GM12878 (cell line): ENCODE measurements at regions of chr1 and their contacts with region 1.

Region 1: GRCh38 chr1:17606826-17607440 is 67.4 kb downstream of the ARHGEF10L start:
- DNase-seq: no peak
- ATAC-seq: peak; percentile 81
- H3K4me3 ChIP-seq: no peak overlapping the region
- H3K27ac ChIP-seq: no peak overlapping the region
- H3K4me1 ChIP-seq: no peaks in the 10 kb centered on the region
- H3K27me3 ChIP-seq: no peaks in the 10 kb centered on the region; a peak in 2 of 4 replicates
- CTCF ChIP-seq: peak; percentile 80 to 92 (median 91); a peak in 5 of 6 replicates
- EP300 ChIP-seq: no peak
- POLR2A ChIP-seq: no peak
- RAD21 ChIP-seq: peak; percentile 83

Region 2: GRCh38 chr1:17494114-17494729 is 112.7 kb before region 1 on chr1:
- CTCF ChIA-PET with region 1: interaction called, 255 read pairs
- POLR2A ChIA-PET with region 1: interaction called, 6 read pairs
- RAD21 ChIA-PET with region 1: interaction called, 19 read pairs
- SMC1A ChIA-PET with region 1: interaction called, 13 read pairs
- in situ Hi-C with region 1: no loop called
- intact Hi-C with region 1: loop called (anchors 2 kb)
- DNase-seq: peak; percentile 15
- ATAC-seq: peak; percentile 99
- H3K4me3 ChIP-seq: no peak overlapping the region
- H3K27ac ChIP-seq: no peak overlapping the region
- H3K4me1 ChIP-seq: no peaks in the 10 kb centered on the region
- H3K27me3 ChIP-seq: no peaks in the 10 kb centered on the region
- CTCF ChIP-seq: peak; percentile 84 to 91 (median 87)
- EP300 ChIP-seq: no peak
- POLR2A ChIP-seq: no peak
- RAD21 ChIP-seq: peak; percentile 80

Region 3: GRCh38 chr1:17507916-17508315 is 99.0 kb before region 1 on chr1:
- CTCF ChIA-PET with region 1: interaction called, 255 read pairs
- POLR2A ChIA-PET with region 1: interaction called, 5 read pairs
- RAD21 ChIA-PET with region 1: interaction called, 118 read pairs
- SMC1A ChIA-PET with region 1: interaction called, 88 read pairs
- in situ Hi-C with region 1: loop called (anchors 10 kb)
- intact Hi-C with region 1: no loop called
- DNase-seq: no peak
- ATAC-seq: no peak
- H3K4me3 ChIP-seq: no peak overlapping the region
- H3K27ac ChIP-seq: no peak overlapping the region
- H3K4me1 ChIP-seq: no peaks in the 10 kb centered on the region
- H3K27me3 ChIP-seq: no peaks in the 10 kb centered on the region
- CTCF ChIP-seq: 0 out of 6 replicates have a peak, but pooled peaks of 2 of the 3 experiments have one; percentile 15 to 16
- EP300 ChIP-seq: no peak
- POLR2A ChIP-seq: no peak
- RAD21 ChIP-seq: no peak

Region 4: GRCh38 chr1:17574516-17574915 is 32.4 kb before region 1 on chr1:
- CTCF ChIA-PET with region 1: interaction called, 29 read pairs
- POLR2A ChIA-PET with region 1: no interaction called
- RAD21 ChIA-PET with region 1: interaction called, 24 read pairs
- SMC1A ChIA-PET with region 1: interaction called, 6 read pairs
- in situ Hi-C with region 1: no loop called
- intact Hi-C with region 1: no loop called
- DNase-seq: no peak
- ATAC-seq: peak; percentile 39
- H3K4me3 ChIP-seq: no peak overlapping the region
- H3K27ac ChIP-seq: no peak overlapping the region
- H3K4me1 ChIP-seq: no peaks in the 10 kb centered on the region
- H3K27me3 ChIP-seq: 0 out of 4 replicates have a peak, but pooled peaks cover 0 to 1% of the 10 kb centered on the region in 2 experiments
- CTCF ChIP-seq: no peak
- EP300 ChIP-seq: no peak
- POLR2A ChIP-seq: no peak
- RAD21 ChIP-seq: no peak

Region 5: DNA sequence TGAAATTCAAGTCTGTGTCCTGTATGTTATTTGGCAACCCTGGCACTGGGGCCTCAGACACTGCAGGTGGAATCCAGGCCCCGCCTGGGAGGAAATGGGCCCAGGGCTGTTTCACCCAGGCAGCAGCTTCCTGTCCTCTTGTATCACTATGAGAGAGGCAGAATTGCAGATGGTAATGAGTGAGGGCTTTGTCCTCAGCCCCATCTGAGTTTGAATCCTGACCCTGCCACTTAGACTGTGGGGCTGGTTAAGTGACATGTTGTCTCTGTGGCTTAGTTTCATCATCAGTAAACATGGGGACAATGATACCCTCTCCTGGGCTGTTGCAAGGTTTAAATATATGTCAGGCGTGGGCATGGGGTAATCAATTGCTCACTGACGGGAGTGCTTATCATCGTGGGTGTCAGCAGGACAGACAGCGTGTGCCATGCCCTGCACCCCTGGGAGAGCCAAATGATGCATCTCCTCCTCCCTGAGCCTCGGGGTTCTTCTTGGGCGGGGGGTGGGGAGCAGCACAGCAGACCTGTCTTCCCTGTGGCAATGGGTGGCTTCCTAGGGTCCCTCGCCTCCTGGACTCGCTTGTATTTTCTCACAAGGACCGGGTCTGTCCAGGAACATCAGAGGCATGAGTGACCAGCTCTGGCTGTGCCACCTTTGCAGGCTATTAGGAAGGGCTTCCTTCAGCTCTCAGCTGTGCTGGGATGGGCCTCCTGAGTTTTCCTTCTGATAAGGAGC is 25.4 kb before region 1 on chr1:
- CTCF ChIA-PET with region 1: interaction called, 29 read pairs
- POLR2A ChIA-PET with region 1: no interaction called
- RAD21 ChIA-PET with region 1: interaction called, 24 read pairs
- SMC1A ChIA-PET with region 1: interaction called, 6 read pairs
- in situ Hi-C with region 1: no loop called
- intact Hi-C with region 1: no loop called
- DNase-seq: no peak
- ATAC-seq: peak; percentile 84
- H3K4me3 ChIP-seq: no peak overlapping the region
- H3K27ac ChIP-seq: no peak overlapping the region
- H3K4me1 ChIP-seq: peaks cover 4% of the 10 kb centered on the region
- H3K27me3 ChIP-seq: no peaks in the 10 kb centered on the region; a peak in 1 of 4 replicates
- CTCF ChIP-seq: no peak
- EP300 ChIP-seq: no peak
- POLR2A ChIP-seq: no peak
- RAD21 ChIP-seq: no peak

Region 6: DNA sequence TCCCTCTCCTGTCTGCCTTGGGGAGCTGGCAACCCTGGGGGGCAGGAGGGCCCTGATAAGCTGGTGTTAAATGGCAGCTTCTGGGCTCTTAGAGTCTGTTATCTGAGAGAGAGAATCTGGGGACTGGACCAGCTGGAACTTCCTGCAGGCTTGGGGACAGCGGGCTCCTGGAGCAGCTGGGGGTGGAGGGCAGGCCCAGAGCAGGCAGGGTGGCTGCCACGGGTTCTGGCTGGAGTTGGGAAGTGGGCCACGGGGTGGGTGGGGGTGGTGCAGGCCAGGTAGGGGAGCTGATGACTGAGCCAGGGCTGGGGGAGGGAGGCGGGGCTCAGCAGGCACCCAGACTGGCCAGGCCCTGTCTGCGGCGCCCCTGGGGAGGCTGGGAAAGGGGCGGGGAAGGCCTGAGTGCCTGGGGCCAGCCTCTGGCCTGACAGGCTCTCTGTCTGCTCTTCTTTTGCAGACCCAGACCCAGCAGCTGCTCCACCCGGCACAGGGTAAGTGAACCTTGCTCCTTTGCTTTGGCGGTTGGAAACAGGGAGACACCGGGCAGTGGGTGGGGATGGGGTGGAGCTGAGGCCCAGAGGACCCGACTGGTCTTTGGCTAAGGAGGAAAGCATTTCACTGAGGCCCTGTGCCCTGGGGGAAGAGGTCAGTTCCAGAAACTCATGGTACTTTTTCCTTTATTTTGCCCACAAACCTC is 18.8 kb before region 1 on chr1:
- CTCF ChIA-PET with region 1: interaction called, 10 read pairs
- POLR2A ChIA-PET with region 1: no interaction called
- RAD21 ChIA-PET with region 1: interaction called, 4 read pairs
- SMC1A ChIA-PET with region 1: interaction called, 4 read pairs
- in situ Hi-C with region 1: no loop called
- intact Hi-C with region 1: no loop called
- DNase-seq: no peak
- ATAC-seq: no peak; the same call in 2 of the 3 replicates
- H3K4me3 ChIP-seq: no peak overlapping the region
- H3K27ac ChIP-seq: no peak overlapping the region
- H3K4me1 ChIP-seq: no peaks in the 10 kb centered on the region
- H3K27me3 ChIP-seq: no peaks in the 10 kb centered on the region; a peak in 2 of 4 replicates
- CTCF ChIP-seq: no peak
- EP300 ChIP-seq: no peak
- POLR2A ChIP-seq: no peak
- RAD21 ChIP-seq: no peak

Region 7: GRCh38 chr1:17671741-17672140 is 64.8 kb after region 1 on chr1:
- CTCF ChIA-PET with region 1: no interaction called
- POLR2A ChIA-PET with region 1: no interaction called
- RAD21 ChIA-PET with region 1: no interaction called
- SMC1A ChIA-PET with region 1: no interaction called
- in situ Hi-C with region 1: no loop called
- intact Hi-C with region 1: no loop called
- DNase-seq: no peak
- ATAC-seq: peak; percentile 59
- H3K4me3 ChIP-seq: no peak overlapping the region
- H3K27ac ChIP-seq: no peak overlapping the region
- H3K4me1 ChIP-seq: no peaks in the 10 kb centered on the region
- H3K27me3 ChIP-seq: no peaks in the 10 kb centered on the region
- CTCF ChIP-seq: 0 out of 6 replicates have a peak, but pooled peaks of 1 of the 3 experiments have one; percentile 6
- EP300 ChIP-seq: no peak
- POLR2A ChIP-seq: no peak
- RAD21 ChIP-seq: no peak